Heart right ventricle (tissue), 16 donors: ENCODE measurements at regions of chr10 and their contacts with region 1.

Region 1: GRCh38 chr10:75431180-75432111 is at the start of gene LRMDA:
- DNase-seq: peak; percentile 29 to 56
- ATAC-seq: peak; percentile 32 to 83 (median 52)
- H3K4me3 ChIP-seq: peak within 1 kb of the TSS; percentile 48 to 84 (median 76)
- H3K27ac ChIP-seq: peak within 1 kb of the TSS; percentile 71 to 95 (median 86)
- H3K4me1 ChIP-seq: peaks cover 7 to 66% (median 53%) of the 10 kb centered on the region in 9 donors
- H3K27me3 ChIP-seq: no peaks in the 10 kb centered on the region
- CTCF ChIP-seq: no peak
- total RNA-seq, gene LRMDA: 4.7 to 59.8 (median 13.6) TPM

Region 2: DNA sequence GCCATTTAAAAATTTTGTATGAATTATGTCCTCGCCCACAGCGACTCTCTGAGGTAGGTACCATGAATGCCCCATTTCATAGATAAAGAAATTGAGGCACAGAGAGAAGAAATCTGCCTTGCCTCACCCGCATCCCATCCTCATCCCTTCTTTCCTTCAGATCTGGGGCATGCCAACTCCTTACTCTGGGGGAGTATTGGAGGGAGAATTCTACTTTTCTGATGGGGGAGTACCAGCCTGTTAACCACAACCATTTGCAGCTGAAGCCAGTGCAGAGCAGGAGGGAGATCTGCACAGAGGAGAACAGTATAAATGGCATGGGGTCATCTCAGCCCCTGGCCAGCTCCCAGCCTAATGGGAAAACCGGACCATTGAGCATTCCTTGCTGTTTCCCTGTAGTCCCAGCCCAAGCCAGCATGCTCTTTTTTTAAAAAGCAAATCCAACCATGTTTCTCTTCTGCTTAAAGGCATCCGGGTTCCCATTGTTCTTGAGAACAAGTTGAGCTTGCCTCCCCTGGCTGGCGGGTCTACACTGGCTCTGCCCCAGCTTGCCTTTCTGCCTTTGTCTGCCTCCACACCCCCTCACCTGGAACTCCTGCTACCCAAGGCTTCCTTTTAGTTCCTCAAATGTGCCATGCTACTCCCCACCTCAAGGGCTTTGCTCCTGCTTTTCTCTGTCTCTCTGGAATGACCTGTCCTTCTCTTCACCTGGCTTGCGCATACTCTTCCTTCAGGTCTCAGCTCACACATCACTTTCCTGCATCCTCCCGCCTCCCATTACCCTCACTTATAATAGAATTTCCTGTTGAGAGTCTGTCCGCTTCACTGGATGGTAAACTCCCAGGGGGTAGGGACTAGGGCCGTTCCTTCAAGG is 21.1 kb before region 1 on chr10:
- intact Hi-C with region 1: loop called in 1 of 10 experiments (anchors 2 kb)
- DNase-seq: peak; percentile 42 to 47
- ATAC-seq: peak in 7 of 8 donors; percentile 16 to 46 (median 41)
- H3K4me3 ChIP-seq: peak overlapping the region in 5 of 10 donors; percentile 63 to 95 (median 78)
- H3K27ac ChIP-seq: peak overlapping the region in 7 of 10 donors; percentile 87 to 96 (median 92)
- H3K4me1 ChIP-seq: peaks cover 4 to 47% (median 32%) of the 10 kb centered on the region in 9 donors
- H3K27me3 ChIP-seq: peaks cover 0 to 55% (median 12%) of the 10 kb centered on the region in 7 donors
- CTCF ChIP-seq: no peak

Region 3: DNA sequence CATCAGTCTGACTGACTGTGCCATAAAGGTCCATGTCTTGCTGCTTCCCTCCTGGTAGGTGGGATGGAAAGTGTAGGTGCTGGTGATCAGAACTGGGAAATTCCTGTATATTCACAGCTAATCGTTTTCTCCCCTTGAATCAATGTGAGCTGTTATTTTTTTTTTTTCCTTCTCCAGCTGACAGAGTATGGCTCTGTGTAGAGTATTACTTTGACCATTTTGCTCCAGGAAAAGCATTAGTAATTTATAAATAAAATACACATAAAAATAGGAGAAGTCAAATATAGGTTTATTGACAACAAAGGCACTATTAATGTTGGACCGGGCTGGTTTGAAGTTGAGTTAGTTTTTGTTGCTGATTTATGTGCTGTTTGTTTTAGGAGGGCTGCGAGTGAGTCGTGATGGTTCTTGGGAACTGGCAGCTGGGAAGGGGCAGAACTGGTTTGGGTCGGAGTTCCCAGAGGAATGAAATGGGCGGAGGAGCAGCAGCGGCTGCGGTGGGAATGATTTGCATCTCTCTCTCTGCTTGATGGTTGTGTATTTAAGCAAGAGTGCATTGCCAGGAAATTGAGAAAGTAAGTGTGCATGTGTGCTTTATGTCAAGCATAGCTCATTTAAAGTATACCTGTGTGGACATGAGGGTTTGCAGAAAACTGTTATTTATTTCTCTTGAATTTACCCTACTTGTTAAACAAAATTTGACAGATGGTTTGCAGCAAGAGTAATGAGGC is 80.9 kb after region 1 on chr10:
- intact Hi-C with region 1: no loop called
- DNase-seq: peak in 1 of 2 donors; percentile 12
- ATAC-seq: no peak
- H3K4me3 ChIP-seq: no peak overlapping the region
- H3K27ac ChIP-seq: no peak overlapping the region
- H3K4me1 ChIP-seq: peaks cover 0 to 48% (median 21%) of the 10 kb centered on the region in 9 donors
- H3K27me3 ChIP-seq: no peaks in the 10 kb centered on the region
- CTCF ChIP-seq: no peak

Region 4: GRCh38 chr10:75528392-75528791 is 96.9 kb after region 1 on chr10:
- intact Hi-C with region 1: no loop called
- DNase-seq: no peak
- ATAC-seq: peak in 2 of 8 donors; percentile 20 to 52
- H3K4me3 ChIP-seq: no peak overlapping the region
- H3K27ac ChIP-seq: no peak overlapping the region
- H3K4me1 ChIP-seq: peaks cover 0 to 16% (median 0%) of the 10 kb centered on the region in 9 donors
- H3K27me3 ChIP-seq: no peaks in the 10 kb centered on the region
- CTCF ChIP-seq: no peak

Region 5: GRCh38 chr10:75593692-75594556 is 162.5 kb after region 1 on chr10:
- intact Hi-C with region 1: loop called in 1 of 10 experiments (anchors 10 kb)
- DNase-seq: no peak
- ATAC-seq: peak in 1 of 8 donors; percentile 35
- H3K4me3 ChIP-seq: no peak overlapping the region
- H3K27ac ChIP-seq: peak overlapping the region in 1 of 10 donors; percentile 80
- H3K4me1 ChIP-seq: peaks cover 0 to 24% (median 2%) of the 10 kb centered on the region in 9 donors
- H3K27me3 ChIP-seq: no peaks in the 10 kb centered on the region
- CTCF ChIP-seq: peak in 3 of 9 donors; percentile 11 to 27 (median 20)